Activated CD4-positive, alpha-beta T cell treated with anti-CD3 and anti-CD28 coated beads, Interleukin-2, amount 10 ng/mL, durations not matched to agents 24 days and 14 days (primary cell): ENCODE measurements at regions of chr2 and their contacts with region 1.

Region 1: DNA sequence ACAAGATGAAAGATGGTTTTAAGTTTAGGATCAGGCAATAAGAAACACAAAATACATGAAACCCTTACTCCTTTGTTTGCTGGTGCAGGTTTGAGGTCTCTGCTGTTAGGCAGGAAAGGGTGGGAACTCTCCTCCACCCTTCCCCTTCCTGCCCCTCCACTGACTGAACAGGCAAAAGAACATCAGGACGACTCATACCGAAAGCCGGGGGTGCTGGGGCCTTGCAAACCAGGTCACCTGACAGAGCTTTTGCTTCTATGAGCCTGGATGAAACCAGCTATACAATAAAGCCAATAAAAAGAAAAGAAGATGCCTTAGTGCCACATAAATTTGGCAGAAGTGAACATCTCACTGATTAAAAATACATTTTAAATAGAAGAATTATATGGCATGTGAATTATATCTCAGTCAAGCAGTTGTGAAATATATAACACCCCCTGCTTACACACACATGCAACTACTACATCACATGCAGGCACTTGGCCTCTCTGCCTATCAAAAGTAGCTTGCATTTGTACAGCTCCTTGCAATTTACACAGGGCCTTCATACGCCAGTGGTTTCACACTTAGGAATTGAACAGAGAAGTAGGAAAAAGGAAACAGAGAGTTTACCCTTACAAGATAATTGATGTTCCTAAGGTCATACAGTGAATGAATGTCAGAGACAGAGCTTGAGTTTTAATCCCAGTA is 215.1 kb upstream of the TRIB2 start:
- DNase-seq: peak; percentile 94
- H3K4me3 Mint-ChIP-seq: peak overlapping the region; percentile 65
- H3K27ac Mint-ChIP-seq: peak overlapping the region; percentile 84
- H3K4me1 Mint-ChIP-seq: peaks cover 86% of the 10 kb centered on the region
- H3K27me3 Mint-ChIP-seq: no peaks in the 10 kb centered on the region

Region 2: DNA sequence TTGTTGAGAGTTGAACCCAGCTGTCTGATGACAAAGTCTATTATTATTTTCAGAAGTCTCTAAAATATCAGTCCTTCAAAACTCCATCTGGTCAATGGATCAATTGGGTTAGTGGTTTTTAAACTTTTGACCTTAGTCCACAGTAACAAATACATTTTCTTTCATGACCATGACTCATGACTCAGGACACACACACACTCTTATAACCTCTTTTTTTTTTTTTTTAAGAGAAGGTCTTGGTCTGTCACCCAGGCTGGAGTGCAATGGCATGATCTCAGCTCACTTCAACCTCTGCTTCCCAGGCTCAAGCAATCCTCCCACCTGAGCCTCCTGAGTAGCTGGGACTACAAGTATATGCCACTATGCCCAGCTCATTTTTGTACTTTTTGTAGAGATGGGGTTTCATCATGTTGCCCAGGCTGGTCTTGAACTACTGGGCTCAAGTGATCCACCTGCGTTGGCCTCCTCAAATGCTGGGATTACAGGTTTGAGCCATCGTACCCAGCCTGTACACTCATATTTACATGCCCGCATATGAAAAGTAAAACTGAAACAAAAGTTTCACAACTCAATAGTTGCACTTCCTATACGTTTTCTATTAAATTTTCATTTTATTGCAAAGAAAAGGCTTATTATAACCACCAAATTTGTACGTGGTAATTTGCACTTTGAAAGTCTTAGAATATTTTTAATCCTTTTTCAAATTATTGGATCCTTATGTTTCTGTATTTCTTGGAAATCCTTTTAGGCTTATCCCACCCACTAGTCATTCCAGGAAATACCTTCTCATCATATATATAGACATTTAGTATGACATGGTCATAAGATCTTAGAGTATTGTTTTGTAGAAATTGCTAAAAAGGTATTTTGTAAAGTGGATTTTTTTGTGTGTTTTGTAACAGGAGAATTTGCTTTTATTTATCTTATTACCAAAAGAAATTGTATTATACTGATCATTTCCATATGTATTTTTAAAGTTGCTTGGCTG is 556.2 kb before region 1 on chr2:
- intact Hi-C with region 1: loop called (anchors 5 kb)
- DNase-seq: peak; percentile 69
- H3K4me3 Mint-ChIP-seq: peak overlapping the region; percentile 63
- H3K27ac Mint-ChIP-seq: peak overlapping the region; percentile 45
- H3K4me1 Mint-ChIP-seq: peaks cover 12% of the 10 kb centered on the region
- H3K27me3 Mint-ChIP-seq: peaks cover 8% of the 10 kb centered on the region

Region 3: GRCh38 chr2:12416600-12416999 is 85.0 kb before region 1 on chr2:
- intact Hi-C with region 1: loop called (anchors 5 kb)
- DNase-seq: peak; percentile 86
- H3K4me3 Mint-ChIP-seq: peak overlapping the region; percentile 4
- H3K27ac Mint-ChIP-seq: peak overlapping the region; percentile 25
- H3K4me1 Mint-ChIP-seq: peaks cover 54% of the 10 kb centered on the region
- H3K27me3 Mint-ChIP-seq: no peaks in the 10 kb centered on the region

Region 4: GRCh38 chr2:12436935-12437561 is 64.6 kb before region 1 on chr2:
- intact Hi-C with region 1: no loop called
- DNase-seq: no peak
- H3K4me3 Mint-ChIP-seq: no peak overlapping the region
- H3K27ac Mint-ChIP-seq: no peak overlapping the region
- H3K4me1 Mint-ChIP-seq: peaks cover 15% of the 10 kb centered on the region
- H3K27me3 Mint-ChIP-seq: no peaks in the 10 kb centered on the region

Region 5: DNA sequence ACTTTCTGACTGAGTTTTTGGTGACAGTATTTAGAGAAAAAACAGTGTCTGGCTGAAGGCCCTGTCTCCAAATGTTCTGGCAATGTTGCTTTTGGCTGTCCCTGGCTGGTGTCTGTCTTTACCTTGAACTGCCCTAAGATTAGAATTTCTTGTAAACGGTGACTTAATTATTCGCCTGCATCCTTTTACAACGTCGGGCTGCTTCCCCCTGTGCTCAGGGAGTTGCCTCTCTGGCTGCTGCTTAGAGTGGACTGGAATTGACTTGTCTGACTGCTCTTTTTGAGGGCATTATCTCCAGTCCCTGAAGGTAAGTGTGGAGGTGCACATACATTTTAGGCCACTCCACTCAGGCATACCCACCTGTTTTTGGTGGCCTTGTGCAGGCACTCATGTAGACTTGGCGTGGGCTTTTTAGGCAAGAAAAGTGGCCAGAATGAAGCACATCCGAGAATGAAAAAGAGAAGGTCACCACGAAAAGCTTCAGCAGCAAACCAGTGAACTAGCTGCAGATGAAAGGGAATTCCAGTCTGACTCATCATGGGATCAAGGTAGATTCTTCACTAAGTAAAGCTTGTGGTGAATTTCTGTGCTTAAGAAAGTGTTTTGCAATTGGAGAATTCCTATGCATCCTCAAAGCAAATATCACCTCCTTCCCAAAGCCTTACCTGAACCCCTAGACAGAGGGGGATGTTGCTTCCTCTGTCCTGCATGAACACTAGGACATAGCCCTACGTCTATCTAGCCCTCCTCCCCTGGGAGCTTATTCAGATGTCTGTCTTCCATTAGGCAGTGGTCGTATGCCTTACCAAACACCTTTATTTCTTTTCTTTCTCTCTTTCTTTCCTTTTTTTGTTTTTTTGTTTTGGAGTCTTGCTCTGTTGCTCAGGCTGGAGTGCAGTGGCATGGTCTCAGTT is 15.2 kb before region 1 on chr2:
- intact Hi-C with region 1: loop called (anchors 2 kb)
- DNase-seq: peak; percentile 55
- H3K4me3 Mint-ChIP-seq: no peak overlapping the region
- H3K27ac Mint-ChIP-seq: no peak overlapping the region
- H3K4me1 Mint-ChIP-seq: peaks cover 48% of the 10 kb centered on the region
- H3K27me3 Mint-ChIP-seq: no peaks in the 10 kb centered on the region

Region 6: GRCh38 chr2:12602661-12603060 is 101.0 kb after region 1 on chr2:
- intact Hi-C with region 1: no loop called
- DNase-seq: no peak
- H3K4me3 Mint-ChIP-seq: no peak overlapping the region
- H3K27ac Mint-ChIP-seq: no peak overlapping the region
- H3K4me1 Mint-ChIP-seq: peaks cover 5% of the 10 kb centered on the region
- H3K27me3 Mint-ChIP-seq: peaks cover 12% of the 10 kb centered on the region

Region 7: GRCh38 chr2:12856934-12857601 is 355.5 kb after region 1 on chr2:
- intact Hi-C with region 1: loop called (anchors 5 kb)
- DNase-seq: peak; percentile 79
- H3K4me3 Mint-ChIP-seq: no peak overlapping the region
- H3K27ac Mint-ChIP-seq: no peak overlapping the region
- H3K4me1 Mint-ChIP-seq: peaks cover 27% of the 10 kb centered on the region
- H3K27me3 Mint-ChIP-seq: peaks cover 9% of the 10 kb centered on the region